Calu3 (cell line): ENCODE measurements at regions of chr9 and their contacts with region 1.

Region 1: GRCh38 chr9:32550562-32551433 is 1.3 kb upstream of the SMIM27 start:
- DNase-seq: peak; percentile 87
- H3K4me3 Mint-ChIP-seq: peak overlapping the region; percentile 91
- H3K27ac Mint-ChIP-seq: peak overlapping the region; percentile 94
- H3K4me1 Mint-ChIP-seq: peaks cover 8% of the 10 kb centered on the region
- H3K27me3 Mint-ChIP-seq: no peaks in the 10 kb centered on the region
- CTCF ChIP-seq: no peak

Region 2: DNA sequence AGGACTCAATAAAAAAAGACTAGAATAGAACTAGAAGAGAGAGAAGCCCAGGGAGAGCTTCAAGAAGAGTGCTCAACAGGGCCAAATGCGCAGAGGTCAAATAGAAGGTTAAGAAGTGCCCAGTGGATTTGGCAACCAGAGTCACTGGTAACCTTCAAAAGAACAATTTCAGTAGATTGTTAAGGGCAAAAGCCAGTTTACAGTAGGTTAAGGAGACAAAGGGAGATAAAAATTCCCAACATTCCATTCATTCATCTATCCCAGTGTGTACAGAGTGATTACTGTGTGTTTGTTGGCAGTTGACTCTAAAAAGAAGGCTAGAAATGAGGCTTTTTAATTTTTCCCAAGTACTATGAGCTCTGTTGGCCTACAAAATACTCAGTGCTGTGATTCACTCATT is 94.2 kb before region 1 on chr9:
- CTCF ChIA-PET with region 1: no interaction called
- intact Hi-C with region 1: no loop called
- DNase-seq: no peak
- H3K4me3 Mint-ChIP-seq: no peak overlapping the region
- H3K27ac Mint-ChIP-seq: no peak overlapping the region
- H3K4me1 Mint-ChIP-seq: no peaks in the 10 kb centered on the region
- H3K27me3 Mint-ChIP-seq: no peaks in the 10 kb centered on the region
- CTCF ChIP-seq: no peak

Region 3: GRCh38 chr9:32571969-32572899 is 21.4 kb after region 1 on chr9:
- CTCF ChIA-PET with region 1: interaction called, 7 read pairs
- intact Hi-C with region 1: loop called (anchors 2 kb)
- DNase-seq: peak; percentile 57
- H3K4me3 Mint-ChIP-seq: peak overlapping the region; percentile 95
- H3K27ac Mint-ChIP-seq: peak overlapping the region; percentile 90
- H3K4me1 Mint-ChIP-seq: no peaks in the 10 kb centered on the region
- H3K27me3 Mint-ChIP-seq: no peaks in the 10 kb centered on the region
- CTCF ChIP-seq: no peak